PC-3 (cell line): ENCODE measurements at regions of chr12 and their contacts with region 1.

Region 1: GRCh38 chr12:127108360-127109215 is 1158.4 kb upstream of the TMEM132C start:
- DNase-seq: peak; percentile 87
- ATAC-seq: peak; percentile 87
- H3K4me3 ChIP-seq: no peak overlapping the region
- H3K27ac ChIP-seq: 0 out of 2 replicates have a peak overlapping the region, but pooled peaks have one; percentile 0
- H3K4me1 ChIP-seq: peaks cover 26% of the 10 kb centered on the region
- H3K27me3 ChIP-seq: no peaks in the 10 kb centered on the region
- CTCF ChIP-seq: peak; percentile 94

Region 2: GRCh38 chr12:126926023-126926594 is 182.5 kb before region 1 on chr12:
- CTCF ChIA-PET with region 1: no interaction called
- POLR2A ChIA-PET with region 1: no interaction called
- intact Hi-C with region 1: loop called (anchors 1 kb)
- DNase-seq: peak; percentile 57
- ATAC-seq: peak; percentile 87
- H3K4me3 ChIP-seq: peak overlapping the region; percentile 36
- H3K27ac ChIP-seq: no peak overlapping the region
- H3K4me1 ChIP-seq: 0 out of 2 replicates have a peak, but pooled peaks cover 4% of the 10 kb centered on the region
- H3K27me3 ChIP-seq: peaks cover 36% of the 10 kb centered on the region
- CTCF ChIP-seq: peak; percentile 62

Region 3: DNA sequence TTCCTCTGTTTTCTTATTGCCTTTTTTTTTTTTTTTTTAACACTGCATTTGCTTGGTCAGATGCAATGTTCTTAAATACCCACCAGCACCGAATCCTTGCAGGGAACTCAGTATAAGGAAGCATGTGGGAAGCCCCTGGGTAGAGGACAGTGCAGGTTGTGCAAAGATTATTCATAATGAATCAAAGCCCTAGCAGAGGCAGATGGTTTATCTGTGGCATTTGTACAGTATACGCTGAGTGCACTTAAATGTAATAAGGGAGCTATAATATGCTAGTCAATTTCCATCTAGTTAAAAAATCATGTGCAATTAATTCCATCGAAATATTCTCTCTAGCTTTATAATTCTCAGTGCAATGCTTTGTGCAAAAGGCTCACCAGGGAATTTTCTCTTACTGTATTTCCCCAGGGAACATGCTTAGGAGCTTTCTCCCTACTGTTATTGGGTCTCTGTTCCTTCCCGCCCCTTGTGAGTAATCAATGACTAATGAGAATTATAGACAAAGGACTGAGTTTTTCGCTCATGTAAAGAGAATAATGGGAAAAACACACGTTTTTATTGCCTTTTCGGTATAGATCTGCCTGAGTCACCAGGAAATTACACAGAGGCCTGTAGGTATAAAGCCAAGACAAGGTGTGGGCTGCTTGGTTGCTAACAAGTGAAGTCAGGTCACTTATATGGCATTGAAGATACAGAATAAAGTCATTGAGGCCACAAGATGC is 55.9 kb before region 1 on chr12:
- CTCF ChIA-PET with region 1: interaction called, 4 read pairs
- POLR2A ChIA-PET with region 1: no interaction called
- intact Hi-C with region 1: loop called (anchors 1 kb)
- DNase-seq: peak; percentile 99
- ATAC-seq: peak; percentile 82
- H3K4me3 ChIP-seq: peak overlapping the region; percentile 59
- H3K27ac ChIP-seq: peak overlapping the region; percentile 99
- H3K4me1 ChIP-seq: peaks cover 50% of the 10 kb centered on the region
- H3K27me3 ChIP-seq: no peaks in the 10 kb centered on the region
- CTCF ChIP-seq: no peak

Region 4: DNA sequence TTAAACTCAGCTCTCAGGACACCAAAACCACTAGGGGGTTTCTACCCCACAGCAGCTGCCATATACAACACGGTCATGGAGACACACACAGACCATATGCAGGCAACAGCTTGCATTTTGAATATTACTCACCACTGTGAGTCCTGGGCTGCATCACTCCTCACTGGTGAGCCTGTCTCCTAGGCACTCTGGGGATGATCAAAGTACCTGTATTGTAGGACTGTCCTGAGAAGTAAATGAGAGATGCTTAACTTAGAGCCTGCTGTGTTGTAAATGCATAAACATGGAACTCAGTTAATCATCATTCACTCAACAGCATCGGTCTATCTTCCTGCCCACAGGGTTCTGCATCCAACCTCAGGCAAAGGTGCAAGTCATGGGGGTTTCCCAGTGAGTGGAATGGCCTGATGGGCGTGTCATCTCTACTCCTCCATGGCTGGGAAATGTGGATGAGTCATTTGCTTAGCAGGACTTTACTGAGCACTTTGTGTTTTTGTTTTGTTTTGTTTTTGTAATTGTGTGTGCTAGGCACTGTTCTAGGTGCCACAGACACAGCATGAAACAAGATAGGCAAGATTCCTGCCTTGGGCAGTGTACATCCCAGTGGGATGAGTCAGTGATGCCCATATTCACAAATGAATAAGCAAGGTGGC is 17.1 kb after region 1 on chr12:
- CTCF ChIA-PET with region 1: interaction called, 4 read pairs
- POLR2A ChIA-PET with region 1: no interaction called
- intact Hi-C with region 1: loop called (anchors 2 kb)
- DNase-seq: peak; percentile 99
- ATAC-seq: peak; percentile 90
- H3K4me3 ChIP-seq: peak overlapping the region; percentile 20; the same call in 1 of the 2 replicates
- H3K27ac ChIP-seq: peak overlapping the region; percentile 93
- H3K4me1 ChIP-seq: peaks cover 37% of the 10 kb centered on the region
- H3K27me3 ChIP-seq: no peaks in the 10 kb centered on the region
- CTCF ChIP-seq: 0 out of 2 replicates have a peak, but pooled peaks have one; percentile 14

Region 5: DNA sequence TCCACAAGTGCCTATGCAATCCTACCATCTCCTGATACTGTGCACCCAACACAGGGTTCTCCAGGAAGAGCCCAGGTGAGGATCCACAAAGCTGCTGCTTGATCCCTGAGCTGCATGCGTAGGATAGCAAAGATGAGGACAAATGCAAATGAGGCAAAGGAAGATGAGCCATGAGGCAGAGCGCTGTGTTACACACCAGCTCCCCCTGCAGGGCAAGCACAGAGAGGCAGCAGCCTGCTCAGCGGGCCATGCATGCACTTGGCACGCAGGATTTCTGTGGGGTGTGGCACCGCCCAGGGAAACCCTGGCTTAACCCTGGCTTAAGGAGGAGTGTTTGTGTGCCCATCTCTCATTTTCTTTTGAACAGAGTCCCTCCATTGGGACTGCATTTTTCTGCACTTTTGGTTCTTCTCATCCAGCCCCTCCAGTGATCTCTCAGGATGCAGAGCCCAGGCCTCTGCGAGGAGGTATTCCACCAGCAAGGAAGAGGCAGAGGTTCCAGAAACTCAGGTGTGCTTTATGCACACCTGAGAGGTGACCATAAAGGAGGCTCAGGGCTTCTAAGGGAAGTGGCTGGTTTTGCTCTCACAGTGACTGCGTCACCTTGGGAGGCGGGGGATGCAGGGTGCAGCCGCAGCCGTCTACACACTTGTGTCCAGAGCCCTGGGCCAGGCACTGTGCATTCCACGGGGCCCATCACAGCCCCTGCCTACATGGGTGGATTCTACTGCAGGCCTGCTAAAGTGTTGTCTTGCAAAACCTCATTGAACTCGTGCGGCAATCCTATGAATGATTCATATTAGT is 185.1 kb after region 1 on chr12:
- CTCF ChIA-PET with region 1: interaction called, 12 read pairs
- POLR2A ChIA-PET with region 1: no interaction called
- intact Hi-C with region 1: loop called (anchors 1 kb)
- DNase-seq: peak; percentile 93
- ATAC-seq: peak; percentile 98
- H3K4me3 ChIP-seq: no peak overlapping the region
- H3K27ac ChIP-seq: no peak overlapping the region
- H3K4me1 ChIP-seq: peaks cover 9% of the 10 kb centered on the region
- H3K27me3 ChIP-seq: no peaks in the 10 kb centered on the region
- CTCF ChIP-seq: peak; percentile 99

Region 6: GRCh38 chr12:127363392-127363791 is 254.8 kb after region 1 on chr12:
- CTCF ChIA-PET with region 1: interaction called, 10 read pairs
- POLR2A ChIA-PET with region 1: no interaction called
- intact Hi-C with region 1: no loop called
- DNase-seq: peak; percentile 78
- ATAC-seq: peak; percentile 51
- H3K4me3 ChIP-seq: no peak overlapping the region
- H3K27ac ChIP-seq: no peak overlapping the region
- H3K4me1 ChIP-seq: no peaks in the 10 kb centered on the region
- H3K27me3 ChIP-seq: no peaks in the 10 kb centered on the region
- CTCF ChIP-seq: peak; percentile 82